ENCODE measurements at regions of chr21 and their contacts with region 1.

Region 1: DNA sequence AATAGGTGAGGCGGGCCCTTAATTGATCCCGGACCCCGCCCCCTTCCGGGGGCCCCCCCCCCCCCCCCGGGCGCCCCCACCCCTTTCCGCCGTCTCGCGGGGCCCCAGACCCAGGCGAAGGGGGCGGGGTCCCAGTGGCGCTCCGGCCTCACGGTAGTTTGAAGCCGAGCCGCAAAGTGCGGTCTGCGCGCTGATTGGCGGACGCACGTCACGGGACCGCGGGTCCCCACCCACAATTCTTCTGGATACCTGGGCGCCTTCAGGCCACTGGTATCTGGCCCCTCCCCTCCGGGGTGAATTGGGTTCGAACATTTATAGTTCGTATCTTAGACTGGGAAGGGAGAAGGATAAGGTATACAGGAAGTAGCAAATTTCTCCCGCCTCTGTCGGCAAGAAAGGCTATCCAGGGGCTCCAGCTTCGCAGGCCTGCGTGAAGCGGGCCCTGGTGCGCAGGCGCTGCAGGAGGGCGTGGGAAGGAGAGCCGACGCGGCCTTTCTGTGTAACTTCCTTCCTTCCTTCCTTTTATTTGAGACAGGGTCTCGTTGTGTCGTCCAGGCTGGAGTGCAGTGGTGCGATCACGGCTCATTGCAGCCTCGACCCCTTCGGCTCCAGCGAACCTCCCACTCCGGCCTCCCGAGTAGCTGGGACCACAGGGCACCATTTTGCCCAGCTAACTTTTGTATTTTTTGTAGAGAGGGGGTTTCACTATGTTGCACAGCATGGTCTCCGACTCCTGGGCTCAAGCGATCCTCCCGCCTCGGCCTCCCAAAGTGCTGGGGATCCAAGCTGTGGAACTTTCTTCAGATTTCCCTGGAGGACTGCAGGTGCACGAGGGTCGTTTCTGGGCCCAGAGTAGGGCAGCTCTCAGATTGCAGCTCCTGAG is 564 bp upstream of the HMGN1 start:
- DNase-seq: peak; percentile 98

Region 2: DNA sequence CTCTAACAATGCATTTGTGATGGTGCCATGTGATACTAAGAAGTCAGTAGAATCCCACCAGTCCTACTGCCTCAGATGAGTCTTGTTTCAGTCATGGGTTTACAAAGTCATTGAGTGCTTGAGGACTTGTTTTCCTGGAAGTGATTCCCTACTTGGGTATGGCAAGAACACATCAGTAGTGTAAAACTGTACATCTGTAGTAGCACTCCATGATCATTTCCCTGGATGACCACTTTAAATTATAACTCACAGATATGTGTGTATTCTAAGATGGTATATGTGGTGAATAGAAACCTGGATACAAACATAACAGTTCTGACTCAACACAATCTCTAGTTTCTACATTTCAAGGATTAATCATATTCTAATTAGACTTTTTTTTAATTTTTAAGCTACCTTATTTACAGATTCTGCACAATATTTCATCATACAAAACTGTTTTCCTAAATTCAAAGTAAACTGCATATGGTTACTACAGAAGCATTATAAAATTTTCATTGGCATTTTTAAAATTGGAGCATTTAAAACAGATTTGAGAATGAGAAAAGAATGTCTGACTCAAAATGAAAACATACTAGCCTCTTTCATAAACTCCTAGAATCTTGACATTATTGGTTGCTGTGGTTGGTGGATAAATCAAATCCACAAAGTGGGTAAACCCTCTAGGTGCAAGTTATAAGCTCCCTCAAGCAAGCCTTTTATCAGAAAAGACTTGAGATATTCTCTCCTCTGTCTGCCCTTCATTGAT is 159.4 kb before region 1 on chr21:
- intact Hi-C with region 1: no loop called
- DNase-seq: no peak

Region 3: GRCh38 chr21:39379986-39380891 is 30.8 kb after region 1 on chr21:
- intact Hi-C with region 1: loop called (anchors 1 kb)
- DNase-seq: peak; percentile 98

Region 4: GRCh38 chr21:39555911-39556590 is 206.6 kb after region 1 on chr21:
- intact Hi-C with region 1: no loop called
- DNase-seq: no peak